Mammary epithelial cell (primary cell): ENCODE measurements at regions of chr1 and their contacts with region 1.

Region 1: DNA sequence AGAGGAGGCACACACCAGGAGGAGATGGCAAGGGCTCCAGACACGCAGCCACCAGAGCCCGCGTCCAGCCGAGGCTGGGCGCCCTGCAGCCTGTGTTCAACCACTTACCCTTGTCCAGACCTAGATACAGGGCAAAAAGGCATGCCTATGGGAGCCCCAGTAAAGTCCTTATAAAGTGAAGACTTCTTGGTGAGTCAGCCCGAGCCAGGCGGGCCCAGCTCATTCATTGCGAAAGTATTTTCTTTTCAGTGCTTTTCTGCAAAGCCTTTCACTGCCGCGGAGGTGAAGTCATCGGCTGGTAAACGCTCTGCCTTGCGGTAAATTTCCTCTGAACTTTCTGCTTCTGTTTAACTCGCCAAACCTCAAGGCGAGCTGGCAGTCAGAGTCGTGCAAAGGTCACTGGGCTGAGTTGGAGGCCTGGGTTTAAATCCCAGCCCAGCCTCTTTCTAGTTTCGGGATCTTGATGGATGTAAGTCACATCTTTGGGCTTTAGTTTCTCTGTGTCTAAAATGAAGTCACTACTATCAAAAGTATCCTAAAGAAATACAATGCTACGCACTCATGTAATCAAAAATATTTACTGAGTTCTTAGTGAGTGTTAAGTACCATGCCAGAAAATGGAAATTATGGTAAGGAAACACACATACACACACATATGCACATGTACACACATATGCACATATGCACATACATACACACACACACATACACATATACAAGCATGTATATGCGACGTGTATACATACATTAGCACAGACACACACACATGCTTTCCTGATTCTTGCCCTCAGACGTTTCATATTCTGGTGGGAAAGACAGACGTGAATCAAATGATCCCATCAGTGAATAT is 54.7 kb upstream of the IFFO2 start:
- DNase-seq: peak; percentile 98
- H3K4me3 ChIP-seq: no peak overlapping the region
- H3K27ac ChIP-seq: peak overlapping the region; percentile 71
- H3K4me1 ChIP-seq: peaks cover 33% of the 10 kb centered on the region
- H3K27me3 ChIP-seq: no peaks in the 10 kb centered on the region
- CTCF ChIP-seq: no peak

Region 2: DNA sequence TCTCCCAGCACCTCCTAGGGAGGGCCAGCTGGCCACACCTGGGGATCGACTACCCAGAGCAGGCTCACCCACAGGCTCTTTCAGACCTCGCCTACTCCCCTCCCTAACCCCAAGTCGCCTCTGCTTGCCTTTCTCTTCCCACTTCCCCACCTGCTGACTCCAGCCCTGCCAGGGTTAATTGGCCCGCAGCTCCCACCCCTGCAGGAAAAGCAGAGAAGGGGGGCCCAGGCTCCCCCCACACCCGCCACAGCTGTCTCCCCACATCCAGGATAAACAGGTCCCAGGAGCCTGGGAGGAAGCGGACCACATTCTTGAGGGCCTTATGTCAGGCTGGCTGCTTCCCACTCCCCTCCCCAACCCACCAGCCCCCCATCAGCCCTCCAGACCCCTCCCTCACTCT is 196.8 kb before region 1 on chr1:
- CTCF ChIA-PET with region 1: no interaction called
- dilution Hi-C with region 1: no loop called
- in situ Hi-C with region 1: no loop called
- intact Hi-C with region 1: no loop called
- DNase-seq: no peak
- H3K4me3 ChIP-seq: no peak overlapping the region
- H3K27ac ChIP-seq: no peak overlapping the region
- H3K4me1 ChIP-seq: no peaks in the 10 kb centered on the region
- H3K27me3 ChIP-seq: no peaks in the 10 kb centered on the region
- CTCF ChIP-seq: no peak

Region 3: GRCh38 chr1:18965206-18966173 is 45.7 kb before region 1 on chr1:
- CTCF ChIA-PET with region 1: no interaction called
- dilution Hi-C with region 1: no loop called
- in situ Hi-C with region 1: no loop called
- intact Hi-C with region 1: no loop called
- DNase-seq: peak; percentile 86
- H3K4me3 ChIP-seq: no peak overlapping the region
- H3K27ac ChIP-seq: no peak overlapping the region
- H3K4me1 ChIP-seq: peaks cover 19% of the 10 kb centered on the region
- H3K27me3 ChIP-seq: no peaks in the 10 kb centered on the region
- CTCF ChIP-seq: peak in 1 of 2 donors; percentile 31

Region 4: DNA sequence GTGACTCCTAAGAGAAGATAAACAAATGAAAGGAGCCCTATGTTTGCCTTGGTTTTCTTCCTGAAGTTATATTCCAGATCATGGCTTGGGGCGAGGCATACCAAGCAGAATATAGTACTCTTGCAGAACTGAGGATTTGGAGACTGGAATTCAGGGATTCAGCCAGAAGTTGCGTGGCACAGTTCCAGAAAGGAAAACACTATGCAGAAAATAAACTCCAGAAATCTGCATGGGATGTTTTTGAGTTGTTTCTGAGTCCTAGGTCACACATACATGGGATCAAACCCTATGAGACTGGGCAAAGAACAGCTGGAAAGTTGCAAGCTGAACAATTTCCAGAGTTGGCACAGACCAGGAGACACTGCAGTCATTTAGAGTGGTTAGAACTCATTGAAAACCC is 11.9 kb before region 1 on chr1:
- CTCF ChIA-PET with region 1: no interaction called
- dilution Hi-C with region 1: no loop called
- in situ Hi-C with region 1: no loop called
- intact Hi-C with region 1: loop called (anchors 1 kb)
- DNase-seq: no peak
- H3K4me3 ChIP-seq: no peak overlapping the region
- H3K27ac ChIP-seq: peak overlapping the region; percentile 70
- H3K4me1 ChIP-seq: peaks cover 25% of the 10 kb centered on the region
- H3K27me3 ChIP-seq: no peaks in the 10 kb centered on the region
- CTCF ChIP-seq: no peak

Region 5: DNA sequence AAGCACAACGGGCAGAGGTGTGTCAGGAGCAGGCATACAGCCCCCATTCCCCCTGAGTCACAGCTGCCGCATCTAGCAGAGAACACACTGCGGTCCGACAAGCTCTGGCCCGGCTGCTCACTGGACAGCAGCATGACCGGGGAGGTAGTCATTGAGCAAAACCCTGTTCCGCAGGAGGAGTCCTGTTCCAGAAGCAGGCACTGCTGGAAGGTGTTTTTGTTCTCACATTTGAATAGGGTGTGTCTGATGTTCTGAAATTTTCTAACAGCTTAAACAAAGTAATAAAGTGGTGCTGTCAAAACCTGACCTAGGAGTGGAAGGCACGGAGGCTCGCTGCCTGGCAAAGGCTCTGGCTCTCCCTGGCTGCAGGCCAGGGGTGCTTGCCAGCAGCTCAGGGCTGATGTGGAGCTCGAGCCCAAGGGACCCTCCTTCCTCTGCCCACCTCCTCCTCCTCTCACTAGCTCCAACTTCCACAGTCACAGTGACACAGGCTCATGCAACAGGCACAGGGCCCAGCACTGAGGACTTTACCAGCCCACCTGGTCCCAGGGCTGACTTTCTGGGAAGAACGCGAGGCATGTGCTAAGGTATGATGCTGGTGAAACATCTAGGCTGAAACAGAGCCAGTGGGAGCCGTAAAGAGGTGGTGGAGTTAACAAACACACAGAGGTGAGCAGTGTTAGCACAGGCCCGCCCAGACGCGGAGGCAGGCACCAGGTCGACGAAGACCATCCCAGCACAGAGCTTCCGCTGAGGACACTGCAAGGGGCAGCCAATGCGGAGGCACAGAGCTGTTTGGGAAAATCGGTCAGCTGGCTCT is 63.9 kb after region 1 on chr1:
- CTCF ChIA-PET with region 1: no interaction called
- dilution Hi-C with region 1: loop called (anchors 5 kb)
- in situ Hi-C with region 1: no loop called
- intact Hi-C with region 1: loop called (anchors 1 kb)
- DNase-seq: peak; percentile 97
- H3K4me3 ChIP-seq: no peak overlapping the region
- H3K27ac ChIP-seq: peak overlapping the region; percentile 71
- H3K4me1 ChIP-seq: peaks cover 48% of the 10 kb centered on the region
- H3K27me3 ChIP-seq: no peaks in the 10 kb centered on the region
- CTCF ChIP-seq: no peak

Region 6: DNA sequence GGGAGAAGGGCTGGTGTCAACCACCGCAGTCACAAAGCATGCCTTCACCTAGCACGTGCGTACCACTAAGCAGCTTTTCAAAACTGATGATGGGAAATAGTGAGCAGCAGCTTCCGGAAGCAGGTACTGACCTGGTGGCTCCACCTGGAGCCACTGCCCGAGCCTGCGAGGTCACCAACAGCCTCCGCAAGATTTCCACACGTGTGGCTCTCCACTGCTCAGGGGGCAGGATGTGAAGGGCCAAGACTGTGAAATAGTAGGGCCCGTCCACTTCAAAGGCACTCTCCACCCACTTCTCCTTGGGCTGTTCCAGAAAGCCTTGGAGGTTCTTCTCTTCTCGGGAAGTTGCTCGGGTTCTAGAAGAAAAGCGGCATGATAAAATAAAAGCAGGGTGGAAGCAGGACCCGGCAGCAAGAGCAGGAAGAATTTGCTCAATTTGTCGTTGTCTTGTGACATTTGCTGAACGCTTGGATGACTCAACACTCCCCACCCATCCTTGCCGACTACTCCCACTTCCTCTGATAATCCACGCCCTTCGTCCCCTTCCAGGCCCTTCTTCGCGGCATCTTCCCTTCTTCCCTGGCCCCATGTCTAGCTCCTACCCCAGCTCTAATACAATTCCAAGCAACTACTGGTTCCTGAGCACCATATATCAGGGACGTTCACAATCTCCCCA is 70.1 kb after region 1 on chr1:
- CTCF ChIA-PET with region 1: no interaction called
- dilution Hi-C with region 1: loop called (anchors 5 kb)
- in situ Hi-C with region 1: no loop called
- intact Hi-C with region 1: no loop called
- DNase-seq: no peak
- H3K4me3 ChIP-seq: no peak overlapping the region
- H3K27ac ChIP-seq: no peak overlapping the region
- H3K4me1 ChIP-seq: peaks cover 35% of the 10 kb centered on the region
- H3K27me3 ChIP-seq: no peaks in the 10 kb centered on the region
- CTCF ChIP-seq: no peak